GM12878 (cell line): ENCODE measurements at regions of chr9 and their contacts with region 1.

Region 1: GRCh38 chr9:134024828-134025605 is at the start of gene BRD3OS:
- DNase-seq: peak; percentile 93
- ATAC-seq: peak; percentile 95
- H3K4me3 ChIP-seq: peak within 1 kb of the TSS; percentile 89
- H3K27ac ChIP-seq: no peak within 1 kb of the TSS; the same call in 1 of the 2 replicates
- H3K4me1 ChIP-seq: peaks cover 5% of the 10 kb centered on the region
- H3K27me3 ChIP-seq: no peaks in the 10 kb centered on the region
- CTCF ChIP-seq: no peak
- EP300 ChIP-seq: peak in 1 of 2 experiments; percentile 28; a peak in 1 of 4 replicates
- POLR2A ChIP-seq: peak; percentile 60
- RAD21 ChIP-seq: no peak
- polyA plus RNA-seq, gene BRD3OS: 2.1 to 2.6 TPM

Region 2: DNA sequence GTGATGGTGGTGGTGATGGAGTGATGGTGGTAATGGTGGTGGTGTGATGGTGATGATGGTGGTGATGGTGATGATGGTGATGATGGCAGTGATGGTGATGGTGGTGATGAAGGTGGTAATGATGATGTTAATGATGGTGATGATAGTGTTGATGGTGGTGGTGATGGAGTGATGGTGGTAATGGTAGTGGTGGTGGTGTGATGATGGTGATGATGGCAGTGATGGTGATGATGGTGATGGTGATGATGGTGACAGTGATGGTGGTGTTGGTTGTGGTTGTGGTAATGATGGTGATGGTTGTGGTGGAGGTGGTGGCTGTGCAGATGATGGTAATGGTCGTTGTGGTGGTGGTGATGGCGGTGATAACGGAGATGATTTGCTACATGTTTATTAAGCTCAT is 641.6 kb before region 1 on chr9:
- CTCF ChIA-PET with region 1: no interaction called
- POLR2A ChIA-PET with region 1: interaction called, 11 read pairs
- RAD21 ChIA-PET with region 1: no interaction called
- SMC1A ChIA-PET with region 1: no interaction called
- in situ Hi-C with region 1: no loop called
- intact Hi-C with region 1: no loop called
- DNase-seq: no peak
- ATAC-seq: no peak
- H3K4me3 ChIP-seq: no peak overlapping the region
- H3K27ac ChIP-seq: no peak overlapping the region
- H3K4me1 ChIP-seq: no peaks in the 10 kb centered on the region
- H3K27me3 ChIP-seq: no peaks in the 10 kb centered on the region
- CTCF ChIP-seq: no peak
- EP300 ChIP-seq: no peak
- POLR2A ChIP-seq: no peak
- RAD21 ChIP-seq: no peak

Region 3: GRCh38 chr9:133532937-133533668 is 491.9 kb before region 1 on chr9:
- CTCF ChIA-PET with region 1: no interaction called
- POLR2A ChIA-PET with region 1: no interaction called
- RAD21 ChIA-PET with region 1: no interaction called
- SMC1A ChIA-PET with region 1: no interaction called
- in situ Hi-C with region 1: loop called (anchors 25 kb)
- intact Hi-C with region 1: no loop called
- DNase-seq: peak; percentile 15
- ATAC-seq: peak; percentile 83
- H3K4me3 ChIP-seq: no peak overlapping the region
- H3K27ac ChIP-seq: no peak overlapping the region
- H3K4me1 ChIP-seq: no peaks in the 10 kb centered on the region
- H3K27me3 ChIP-seq: peaks cover 8 to 10% of the 10 kb centered on the region in 2 experiments; a peak in 3 of 4 replicates
- CTCF ChIP-seq: peak; percentile 57 to 69 (median 65)
- EP300 ChIP-seq: no peak
- POLR2A ChIP-seq: no peak
- RAD21 ChIP-seq: peak; percentile 71

Region 4: GRCh38 chr9:134059661-134060395 is 34.8 kb after region 1 on chr9:
- CTCF ChIA-PET with region 1: interaction called, 3 read pairs
- POLR2A ChIA-PET with region 1: interaction called, 5 read pairs
- RAD21 ChIA-PET with region 1: no interaction called
- SMC1A ChIA-PET with region 1: no interaction called
- in situ Hi-C with region 1: no loop called
- intact Hi-C with region 1: loop called (anchors 1 kb)
- DNase-seq: peak; percentile 77
- ATAC-seq: peak; percentile 96
- H3K4me3 ChIP-seq: no peak overlapping the region
- H3K27ac ChIP-seq: no peak overlapping the region
- H3K4me1 ChIP-seq: peaks cover 20% of the 10 kb centered on the region
- H3K27me3 ChIP-seq: no peaks in the 10 kb centered on the region
- CTCF ChIP-seq: no peak
- EP300 ChIP-seq: no peak; a peak in 1 of 4 replicates
- POLR2A ChIP-seq: no peak
- RAD21 ChIP-seq: no peak

Region 5: DNA sequence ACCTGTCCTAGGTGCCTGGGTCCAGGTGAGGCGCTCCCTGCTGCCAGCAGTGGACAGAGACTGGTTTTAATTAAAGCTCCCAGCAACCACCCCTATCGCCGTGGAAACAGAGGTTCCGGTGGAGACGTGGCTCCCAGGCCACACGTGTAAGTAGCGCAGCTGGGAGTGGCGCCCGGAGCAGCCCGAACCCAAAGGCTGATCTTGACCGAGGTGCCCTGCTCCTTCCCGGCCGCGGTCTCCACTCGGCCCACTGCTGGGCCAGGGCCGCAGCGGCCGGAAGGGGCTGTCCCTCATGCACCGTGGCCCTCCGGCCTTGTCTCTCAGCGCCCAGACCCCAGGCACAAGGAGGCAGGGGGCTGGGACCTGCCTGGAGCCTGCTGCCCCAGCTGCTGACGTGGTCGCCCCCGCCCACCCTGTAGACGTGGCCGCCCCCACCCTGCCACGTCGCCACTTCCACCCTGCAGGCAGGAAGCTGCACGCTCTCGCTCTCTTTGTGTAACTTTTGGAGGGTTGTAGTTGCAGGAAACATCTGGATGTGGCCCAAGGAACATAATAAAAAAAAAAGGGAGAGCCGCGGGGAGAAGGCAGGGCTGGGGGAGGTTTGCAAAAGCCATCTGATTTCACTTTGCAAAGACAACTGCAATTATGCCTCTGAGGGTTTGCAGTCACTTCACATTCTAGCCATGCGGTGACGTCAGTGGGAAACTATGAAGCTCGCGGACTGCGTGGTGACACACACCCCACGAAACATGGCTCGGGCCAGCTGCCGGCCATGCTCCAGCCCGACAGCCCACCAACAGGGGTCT is 431.1 kb after region 1 on chr9:
- CTCF ChIA-PET with region 1: no interaction called
- POLR2A ChIA-PET with region 1: no interaction called
- RAD21 ChIA-PET with region 1: no interaction called
- SMC1A ChIA-PET with region 1: no interaction called
- in situ Hi-C with region 1: no loop called
- intact Hi-C with region 1: no loop called
- DNase-seq: no peak
- ATAC-seq: peak; percentile 33; the same call in 2 of the 3 replicates
- H3K4me3 ChIP-seq: no peak overlapping the region
- H3K27ac ChIP-seq: no peak overlapping the region
- H3K4me1 ChIP-seq: no peaks in the 10 kb centered on the region
- H3K27me3 ChIP-seq: no peaks in the 10 kb centered on the region
- CTCF ChIP-seq: no peak
- EP300 ChIP-seq: no peak
- POLR2A ChIP-seq: peak; percentile 51
- RAD21 ChIP-seq: no peak